ENCODE measurements at regions of chr6 and their contacts with region 1.

Region 1: DNA sequence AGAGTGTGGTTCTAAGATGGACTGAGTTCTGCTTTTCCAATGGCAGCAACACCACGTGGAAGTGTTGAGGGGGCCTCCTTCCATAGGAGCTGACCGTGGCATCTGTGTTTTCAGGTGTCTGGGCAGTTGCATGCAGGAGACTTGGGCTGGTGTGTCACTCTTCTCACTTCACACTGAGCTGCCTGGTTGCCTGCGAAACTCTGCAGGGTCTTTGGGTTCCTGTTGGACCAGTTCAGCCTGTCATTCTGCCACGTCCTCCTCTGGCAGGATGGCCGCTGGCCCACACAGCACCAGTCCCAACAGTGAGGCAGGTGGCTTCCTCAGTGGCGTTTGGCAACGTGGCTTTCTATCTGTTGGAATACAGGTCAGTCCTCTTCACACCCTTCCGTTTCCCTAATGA is 16.1 kb upstream of the UNC93A start:
- DNase-seq: no peak
- H3K4me3 ChIP-seq: no peak overlapping the region
- H3K27ac ChIP-seq: no peak overlapping the region
- H3K4me1 ChIP-seq: no peaks in the 10 kb centered on the region
- H3K27me3 ChIP-seq: no peaks in the 10 kb centered on the region
- CTCF ChIP-seq: no peak
- EP300 ChIP-seq: no peak
- POLR2A ChIP-seq: no peak

Region 2: GRCh38 chr6:167233490-167233889 is 41.5 kb before region 1 on chr6:
- intact Hi-C with region 1: loop called (anchors 5 kb)
- DNase-seq: no peak
- H3K4me3 ChIP-seq: no peak overlapping the region
- H3K27ac ChIP-seq: no peak overlapping the region
- H3K4me1 ChIP-seq: no peaks in the 10 kb centered on the region
- H3K27me3 ChIP-seq: no peaks in the 10 kb centered on the region
- CTCF ChIP-seq: no peak
- EP300 ChIP-seq: no peak
- POLR2A ChIP-seq: no peak

Region 3: DNA sequence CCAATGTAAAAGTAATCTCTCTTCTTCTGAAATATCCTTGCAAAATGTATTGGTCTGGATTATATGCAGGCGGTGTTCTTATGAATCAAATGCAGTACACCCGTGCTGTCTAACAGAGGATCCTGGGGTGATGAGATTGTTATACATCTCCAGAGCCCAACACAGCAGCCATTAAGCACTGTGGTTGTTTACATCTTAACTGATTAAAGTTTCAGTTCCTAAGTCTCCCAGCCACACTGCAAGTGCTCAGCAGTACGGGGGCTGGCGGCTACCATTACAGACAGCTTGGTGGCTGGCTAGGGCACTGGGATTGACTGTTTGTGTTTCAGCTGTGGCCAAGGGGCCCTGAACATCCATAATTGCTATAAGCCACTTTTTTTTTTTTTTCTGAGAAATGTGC is 23.2 kb after region 1 on chr6:
- intact Hi-C with region 1: no loop called
- DNase-seq: no peak
- H3K4me3 ChIP-seq: no peak overlapping the region
- H3K27ac ChIP-seq: no peak overlapping the region
- H3K4me1 ChIP-seq: no peaks in the 10 kb centered on the region
- H3K27me3 ChIP-seq: no peaks in the 10 kb centered on the region
- CTCF ChIP-seq: no peak
- EP300 ChIP-seq: no peak
- POLR2A ChIP-seq: no peak